Caco-2 (cell line): ENCODE measurements at regions of chr10 and their contacts with region 1.

Region 1: DNA sequence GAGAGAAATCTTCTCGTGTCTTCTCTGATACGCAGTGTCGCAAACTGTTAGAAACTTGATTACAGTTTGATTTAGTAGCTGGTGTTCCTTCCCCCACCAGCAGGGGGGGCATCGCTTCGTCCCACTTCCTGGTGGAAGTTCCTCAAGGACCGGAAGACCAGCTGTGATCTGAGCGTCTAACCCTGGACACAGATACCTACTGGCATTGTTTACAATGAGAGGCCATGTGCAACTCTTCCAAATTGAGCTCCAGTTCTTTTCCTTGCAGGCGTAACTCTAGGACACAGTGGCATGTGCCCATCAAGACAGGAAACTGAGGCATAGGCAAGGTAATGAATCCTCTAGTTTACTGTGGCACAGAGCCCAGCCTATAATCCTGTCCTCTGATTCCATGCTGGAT is 219.0 kb downstream of the CCDC3 start:
- DNase-seq: peak; percentile 70 to 79
- H3K4me3 ChIP-seq: no peak overlapping the region
- H3K4me3 Mint-ChIP-seq: no peak overlapping the region
- H3K27ac Mint-ChIP-seq: no peak overlapping the region
- H3K4me1 ChIP-seq: no peaks in the 10 kb centered on the region
- H3K4me1 Mint-ChIP-seq: peaks cover 6% of the 10 kb centered on the region
- H3K27me3 ChIP-seq: no peaks in the 10 kb centered on the region
- H3K27me3 Mint-ChIP-seq: no peaks in the 10 kb centered on the region
- CTCF ChIP-seq: peak; percentile 86 to 95

Region 2: DNA sequence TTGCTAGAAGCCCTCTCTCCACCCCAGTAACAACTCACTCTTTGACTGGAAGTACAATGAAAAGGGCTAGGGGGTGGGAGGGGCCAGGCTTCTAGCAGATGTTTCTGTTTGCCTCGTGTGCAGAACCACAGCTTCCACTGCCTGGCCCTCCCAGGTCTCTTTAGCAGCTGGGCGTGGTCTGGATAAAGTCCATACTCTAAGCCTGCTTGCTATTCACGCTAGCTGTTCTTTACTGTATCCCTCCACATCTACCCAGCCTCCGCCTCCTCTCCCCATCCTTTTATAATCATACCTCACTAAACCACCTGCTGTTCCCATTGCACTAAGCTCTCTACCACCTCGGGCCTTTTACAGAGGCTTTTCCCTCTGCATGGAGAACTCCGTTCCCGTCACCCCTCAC is 144.4 kb before region 1 on chr10:
- CTCF ChIA-PET with region 1: no interaction called
- POLR2A ChIA-PET with region 1: no interaction called
- intact Hi-C with region 1: no loop called
- DNase-seq: peak; percentile 75 to 85
- H3K4me3 ChIP-seq: no peak overlapping the region
- H3K4me3 Mint-ChIP-seq: no peak overlapping the region
- H3K27ac Mint-ChIP-seq: no peak overlapping the region
- H3K4me1 ChIP-seq: peaks cover 12% of the 10 kb centered on the region
- H3K4me1 Mint-ChIP-seq: peaks cover 19% of the 10 kb centered on the region
- H3K27me3 ChIP-seq: no peaks in the 10 kb centered on the region
- H3K27me3 Mint-ChIP-seq: no peaks in the 10 kb centered on the region
- CTCF ChIP-seq: no peak

Region 3: GRCh38 chr10:13056456-13057077 is 274.0 kb after region 1 on chr10:
- CTCF ChIA-PET with region 1: interaction called, 4 read pairs
- POLR2A ChIA-PET with region 1: no interaction called
- intact Hi-C with region 1: loop called (anchors 1 kb)
- DNase-seq: peak in 1 of 2 experiments; percentile 62
- H3K4me3 ChIP-seq: no peak overlapping the region
- H3K4me3 Mint-ChIP-seq: no peak overlapping the region
- H3K27ac Mint-ChIP-seq: no peak overlapping the region
- H3K4me1 ChIP-seq: no peaks in the 10 kb centered on the region
- H3K4me1 Mint-ChIP-seq: no peaks in the 10 kb centered on the region
- H3K27me3 ChIP-seq: no peaks in the 10 kb centered on the region
- H3K27me3 Mint-ChIP-seq: no peaks in the 10 kb centered on the region
- CTCF ChIP-seq: peak; percentile 64 to 88

Region 4: DNA sequence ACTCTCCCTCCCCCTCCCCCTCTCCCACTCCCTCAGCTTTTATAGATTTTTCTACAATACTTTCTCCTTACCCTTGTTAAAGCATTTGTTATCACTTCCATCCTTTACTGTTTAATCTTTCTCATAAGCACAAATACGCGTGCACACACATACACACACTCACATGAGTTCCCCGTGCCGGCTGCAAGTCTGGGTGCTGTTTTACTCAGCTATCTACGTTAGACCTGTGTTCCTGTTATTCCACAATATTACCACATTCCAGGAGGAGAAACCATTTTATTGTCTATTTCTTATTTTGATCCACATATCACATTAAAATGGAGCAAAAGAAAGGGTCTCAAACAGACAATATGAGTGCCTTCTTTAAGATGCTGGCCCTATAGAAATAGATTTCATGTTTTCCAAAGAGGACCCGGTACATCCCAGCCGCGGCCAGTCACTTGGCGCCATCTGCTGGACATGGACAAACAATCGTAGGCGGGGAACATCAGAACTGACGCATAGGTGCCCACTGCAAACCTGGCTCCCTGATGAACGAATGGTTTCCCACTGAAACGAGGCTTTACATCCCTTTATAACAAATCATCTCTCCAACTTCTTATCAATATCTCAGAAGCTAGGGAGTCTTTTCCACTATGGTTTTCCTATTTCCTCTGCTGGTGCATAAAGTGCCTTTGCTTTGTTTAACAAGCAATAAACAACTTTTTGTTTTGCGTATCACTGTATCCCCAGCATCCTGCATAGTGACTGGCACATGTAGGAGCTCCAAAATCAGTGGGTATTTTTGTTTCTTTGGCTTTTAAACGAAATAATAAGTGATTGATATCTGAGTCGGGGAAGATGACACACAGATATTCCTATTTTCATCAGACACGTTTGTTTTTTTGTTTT is 292.3 kb after region 1 on chr10:
- CTCF ChIA-PET with region 1: interaction called, 4 read pairs
- POLR2A ChIA-PET with region 1: no interaction called
- intact Hi-C with region 1: loop called (anchors 1 kb)
- DNase-seq: peak; percentile 74 to 87
- H3K4me3 ChIP-seq: no peak overlapping the region
- H3K4me3 Mint-ChIP-seq: no peak overlapping the region
- H3K27ac Mint-ChIP-seq: no peak overlapping the region
- H3K4me1 ChIP-seq: no peaks in the 10 kb centered on the region
- H3K4me1 Mint-ChIP-seq: no peaks in the 10 kb centered on the region
- H3K27me3 ChIP-seq: no peaks in the 10 kb centered on the region
- H3K27me3 Mint-ChIP-seq: peaks cover 2% of the 10 kb centered on the region
- CTCF ChIP-seq: peak; percentile 95 to 97